Stomach (tissue), 19 donors: ENCODE measurements at regions of chr10 and their contacts with region 1.

Region 1: DNA sequence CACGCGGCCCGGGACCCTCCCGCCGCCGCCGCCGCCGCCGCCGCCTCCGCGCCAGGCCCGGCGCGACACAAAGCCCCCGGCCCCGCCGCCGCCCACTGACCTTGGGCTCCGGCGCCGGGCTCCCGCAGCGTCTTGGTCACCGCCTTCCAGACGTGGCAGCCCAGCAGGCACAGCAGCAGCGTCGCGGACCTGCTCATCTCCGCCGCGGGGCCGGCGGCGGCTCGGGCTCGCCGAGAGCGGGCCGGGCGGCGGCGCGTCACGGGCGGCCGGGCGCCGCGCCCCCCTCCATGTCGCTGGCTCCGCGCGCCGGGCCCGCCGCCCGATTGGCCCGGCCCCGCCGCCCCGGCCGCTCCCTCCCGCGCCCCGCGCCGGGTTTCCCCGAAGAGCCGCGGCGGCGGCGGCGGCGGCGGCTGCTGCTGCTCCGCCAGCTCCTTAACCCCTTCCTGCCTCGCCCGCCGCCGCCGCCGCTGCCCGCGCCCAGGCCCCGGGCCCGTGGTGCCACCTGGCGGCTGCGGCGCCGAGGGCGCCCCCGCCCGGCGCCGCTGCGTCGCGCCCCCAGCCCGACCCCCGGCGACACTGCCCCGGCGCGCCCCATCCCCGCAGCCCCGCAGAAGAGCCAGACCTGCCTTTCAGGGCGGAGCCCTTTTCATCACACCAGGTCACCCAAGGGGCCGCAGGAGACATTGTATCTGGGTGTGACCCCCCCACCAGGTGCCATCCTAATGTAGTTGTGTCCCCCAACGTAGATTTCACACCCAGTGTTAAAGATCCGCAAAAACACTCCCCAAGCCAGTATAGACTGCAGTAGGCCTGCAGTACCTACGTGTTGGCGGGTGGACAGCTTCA is at the start of gene FAM171A1:
- DNase-seq: peak; percentile 69 to 92
- H3K4me3 ChIP-seq: peak within 1 kb of the TSS; percentile 74 to 83 (median 76)
- H3K27ac ChIP-seq: peak within 1 kb of the TSS; percentile 58 to 85 (median 70)
- H3K4me1 ChIP-seq: peaks cover 6 to 34% (median 18%) of the 10 kb centered on the region in 4 donors
- H3K27me3 ChIP-seq: peaks cover 0 to 32% (median 0%) of the 10 kb centered on the region in 3 donors
- CTCF ChIP-seq: peak in 2 of 7 experiments; percentile 17 to 48
- EP300 ChIP-seq: no peak
- POLR2A ChIP-seq: no peak
- total RNA-seq, gene FAM171A1: 1.8 to 98.7 (median 24.6) TPM

Region 2: GRCh38 chr10:15209827-15210509 is 161.1 kb before region 1 on chr10:
- intact Hi-C with region 1: loop called (anchors 5 kb)
- DNase-seq: peak; percentile 87 to 92
- H3K4me3 ChIP-seq: no peak overlapping the region
- H3K27ac ChIP-seq: no peak overlapping the region
- H3K4me1 ChIP-seq: peaks cover 0 to 11% (median 9%) of the 10 kb centered on the region in 4 donors
- H3K27me3 ChIP-seq: no peaks in the 10 kb centered on the region
- CTCF ChIP-seq: peak in 5 of 7 experiments; percentile 58 to 89 (median 81)
- EP300 ChIP-seq: no peak
- POLR2A ChIP-seq: no peak

Region 3: DNA sequence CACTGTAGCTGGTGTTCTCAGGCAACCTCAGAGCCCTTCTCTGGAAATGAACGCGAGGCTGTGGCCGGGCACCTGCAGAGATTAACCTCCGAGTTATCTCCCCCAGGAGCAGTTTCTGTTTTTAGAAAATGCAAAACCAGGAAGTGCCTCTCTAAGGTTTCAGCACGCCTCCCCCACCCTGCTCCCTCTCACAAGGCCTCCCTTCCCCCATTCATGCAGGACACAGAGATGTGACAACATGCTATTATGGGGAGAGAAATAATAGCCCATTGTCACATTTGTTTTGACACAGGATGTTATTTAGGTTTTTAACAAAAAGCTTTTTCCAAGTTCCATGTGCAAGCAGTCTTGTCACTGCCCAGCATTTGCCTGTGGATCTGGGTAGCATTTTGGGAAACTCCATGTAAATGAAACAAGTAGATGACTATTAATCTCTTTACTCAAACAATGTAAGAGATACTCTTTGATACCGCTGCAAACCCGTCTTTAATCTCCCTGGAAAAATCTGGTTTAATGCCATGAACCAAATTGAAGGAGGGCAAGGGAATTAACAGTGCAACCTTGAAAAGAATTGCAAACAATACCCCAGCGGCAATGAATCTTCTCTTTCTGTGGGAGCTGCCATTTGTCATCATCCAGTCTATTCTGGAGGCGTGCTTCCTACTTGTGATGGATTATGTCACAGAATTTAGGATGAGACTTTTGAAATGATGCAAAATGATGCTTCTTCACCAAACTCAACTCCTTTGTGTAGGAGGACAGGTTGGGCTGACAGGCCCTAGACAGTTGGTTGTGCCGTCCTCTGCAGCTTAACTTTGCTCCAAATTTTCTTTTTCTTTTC is 116.1 kb before region 1 on chr10:
- intact Hi-C with region 1: loop called (anchors 10 kb)
- DNase-seq: peak; percentile 34 to 79
- H3K4me3 ChIP-seq: peak overlapping the region; percentile 14 to 37 (median 20)
- H3K27ac ChIP-seq: peak overlapping the region in 4 of 5 donors; percentile 12 to 57 (median 43)
- H3K4me1 ChIP-seq: peaks cover 0 to 16% (median 7%) of the 10 kb centered on the region in 4 donors
- H3K27me3 ChIP-seq: no peaks in the 10 kb centered on the region
- CTCF ChIP-seq: no peak
- EP300 ChIP-seq: no peak
- POLR2A ChIP-seq: no peak

Region 4: GRCh38 chr10:15433850-15434537 is 62.9 kb after region 1 on chr10:
- intact Hi-C with region 1: no loop called
- DNase-seq: peak in 1 of 2 donors; percentile 85
- H3K4me3 ChIP-seq: peak overlapping the region; percentile 22 to 46 (median 38)
- H3K27ac ChIP-seq: no peak overlapping the region
- H3K4me1 ChIP-seq: peaks cover 0 to 8% (median 4%) of the 10 kb centered on the region in 4 donors
- H3K27me3 ChIP-seq: no peaks in the 10 kb centered on the region
- CTCF ChIP-seq: peak in 5 of 7 experiments; percentile 51 to 76 (median 67)
- EP300 ChIP-seq: no peak
- POLR2A ChIP-seq: no peak